HepG2 (cell line): ENCODE measurements at regions of chr17 and their contacts with region 1.

Region 1: DNA sequence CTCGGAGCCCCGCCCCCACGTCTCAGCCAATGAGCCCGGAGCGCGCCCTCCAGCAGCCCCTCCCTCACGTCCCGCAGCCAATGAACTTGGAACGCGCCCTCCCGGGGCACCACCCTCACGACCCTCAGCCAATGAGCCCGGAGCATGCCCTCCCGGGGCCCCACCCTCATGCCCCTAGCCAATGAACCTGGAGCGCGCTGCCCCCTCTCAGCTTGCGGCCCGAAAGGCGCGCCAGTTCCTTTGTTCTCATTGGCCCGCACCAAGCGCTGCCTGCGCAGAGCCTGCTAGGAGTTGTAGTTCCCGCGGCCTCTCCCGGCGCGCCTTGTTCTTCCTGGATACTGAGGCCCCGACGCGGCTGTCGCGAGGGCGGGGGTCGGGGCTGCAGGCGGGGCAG is at the start of gene LRRC45:
- DNase-seq: peak; percentile 99
- ATAC-seq: peak; percentile 76
- H3K4me3 ChIP-seq: peak within 1 kb of the TSS; percentile 80 to 90 (median 90)
- H3K27ac ChIP-seq: peak within 1 kb of the TSS; percentile 78
- H3K4me1 ChIP-seq: peaks cover 69% of the 10 kb centered on the region
- H3K27me3 ChIP-seq: no peaks in the 10 kb centered on the region; a peak in 1 of 5 replicates
- CTCF ChIP-seq: peak; percentile 9; the same call in 1 of the 2 replicates
- EP300 ChIP-seq: no peak
- POLR2A ChIP-seq: no peak
- RAD21 ChIP-seq: no peak
- total RNA-seq, gene LRRC45: 21.4 and 48.1 TPM in 2 replicates

Region 2: GRCh38 chr17:81871387-81872230 is 151.4 kb before region 1 on chr17:
- CTCF ChIA-PET with region 1: interaction called, 3 read pairs
- POLR2A ChIA-PET with region 1: interaction called, 11 read pairs
- in situ Hi-C with region 1: no loop called
- intact Hi-C with region 1: loop called (anchors 5 kb)
- DNase-seq: peak; percentile 86
- ATAC-seq: no peak; the same call in 2 of the 3 replicates
- H3K4me3 ChIP-seq: peak overlapping the region; percentile 65 to 92 (median 90)
- H3K27ac ChIP-seq: peak overlapping the region; percentile 98
- H3K4me1 ChIP-seq: peaks cover 52% of the 10 kb centered on the region
- H3K27me3 ChIP-seq: no peaks in the 10 kb centered on the region
- CTCF ChIP-seq: peak; percentile 74
- EP300 ChIP-seq: no peak; a peak in 1 of 4 replicates
- POLR2A ChIP-seq: peak in 1 of 2 experiments; percentile 58; a peak in 2 of 4 replicates
- RAD21 ChIP-seq: peak; percentile 81

Region 3: DNA sequence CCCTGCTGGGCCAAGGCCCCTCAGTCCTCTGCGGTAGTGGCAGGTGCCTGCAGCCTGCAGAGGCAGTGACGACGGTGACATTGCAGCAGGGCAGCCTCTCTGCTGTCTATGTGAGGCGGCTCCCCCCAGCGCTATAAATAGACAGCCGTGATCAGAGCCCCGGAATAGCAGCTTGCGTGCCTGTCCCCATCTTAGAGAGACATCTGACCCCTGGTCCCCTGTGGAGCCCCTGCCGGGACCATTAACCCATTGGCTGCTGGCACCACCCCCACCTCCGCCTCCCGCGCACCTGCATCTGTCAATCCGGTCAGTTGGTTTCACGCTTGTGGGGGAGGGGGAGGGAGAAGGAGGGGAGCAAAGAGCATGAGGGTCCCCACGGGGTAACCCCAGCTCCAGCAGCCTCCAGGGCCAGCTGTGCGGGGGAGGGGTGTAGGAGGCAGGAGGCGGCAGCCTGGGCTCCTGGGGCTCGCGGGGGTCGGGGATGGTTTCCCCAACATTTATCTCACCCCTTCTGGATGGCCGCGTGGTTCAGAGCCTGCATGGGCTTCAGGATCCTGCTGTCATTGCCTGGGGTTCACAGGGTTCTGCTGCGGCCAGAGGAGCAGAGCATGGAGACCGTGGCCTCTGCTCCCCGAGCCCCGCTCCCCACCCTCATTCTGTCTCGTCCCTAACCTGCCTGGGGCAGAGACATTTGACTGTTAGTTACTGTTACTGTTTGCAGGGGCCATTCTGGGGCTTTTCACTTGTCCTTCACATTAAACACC is 81.0 kb before region 1 on chr17:
- CTCF ChIA-PET with region 1: no interaction called
- POLR2A ChIA-PET with region 1: interaction called, 11 read pairs
- in situ Hi-C with region 1: no loop called
- intact Hi-C with region 1: no loop called
- DNase-seq: no peak
- ATAC-seq: peak; percentile 33
- H3K4me3 ChIP-seq: no peak overlapping the region; a peak in 1 of 6 replicates
- H3K27ac ChIP-seq: no peak overlapping the region
- H3K4me1 ChIP-seq: peaks cover 67% of the 10 kb centered on the region
- H3K27me3 ChIP-seq: peaks cover 16 to 33% of the 10 kb centered on the region in 2 experiments; a peak in 4 of 5 replicates
- CTCF ChIP-seq: no peak
- EP300 ChIP-seq: no peak
- POLR2A ChIP-seq: no peak
- RAD21 ChIP-seq: no peak

Region 4: GRCh38 chr17:81991684-81992305 is 31.2 kb before region 1 on chr17:
- CTCF ChIA-PET with region 1: interaction called, 6 read pairs
- POLR2A ChIA-PET with region 1: interaction called, 470 read pairs
- in situ Hi-C with region 1: no loop called
- intact Hi-C with region 1: loop called (anchors 1 kb)
- DNase-seq: peak; percentile 98
- ATAC-seq: peak; percentile 66
- H3K4me3 ChIP-seq: peak overlapping the region; percentile 29 to 69 (median 44)
- H3K27ac ChIP-seq: peak overlapping the region; percentile 97
- H3K4me1 ChIP-seq: peaks cover 70% of the 10 kb centered on the region
- H3K27me3 ChIP-seq: no peaks in the 10 kb centered on the region
- CTCF ChIP-seq: peak; percentile 77
- EP300 ChIP-seq: peak; percentile 3 to 66; a peak in 3 of 4 replicates
- POLR2A ChIP-seq: peak in 1 of 2 experiments; percentile 92; a peak in 2 of 4 replicates
- RAD21 ChIP-seq: peak; percentile 88

Region 5: GRCh38 chr17:82051776-82052637 is 29.0 kb after region 1 on chr17 and contains the starts of genes GPS1 and RFNG:
- CTCF ChIA-PET with region 1: no interaction called
- POLR2A ChIA-PET with region 1: interaction called, 10 read pairs
- in situ Hi-C with region 1: no loop called
- intact Hi-C with region 1: no loop called
- DNase-seq: peak; percentile 60
- ATAC-seq: peak; percentile 49
- H3K4me3 ChIP-seq: peak within 1 kb of the TSS; percentile 76 to 99 (median 95)
- H3K27ac ChIP-seq: peak within 1 kb of the TSS; percentile 71
- H3K4me1 ChIP-seq: peaks cover 50% of the 10 kb centered on the region
- H3K27me3 ChIP-seq: no peaks in the 10 kb centered on the region; a peak in 2 of 5 replicates
- CTCF ChIP-seq: no peak
- EP300 ChIP-seq: no peak
- POLR2A ChIP-seq: no peak
- RAD21 ChIP-seq: peak; percentile 54; the same call in 1 of the 2 replicates
- total RNA-seq, gene GPS1: 106 and 124 TPM in 2 replicates
- total RNA-seq, gene RFNG: 27.8 and 64.0 TPM in 2 replicates

Region 6: GRCh38 chr17:82153745-82154375 is 130.9 kb after region 1 on chr17:
- CTCF ChIA-PET with region 1: interaction called, 14 read pairs
- POLR2A ChIA-PET with region 1: interaction called, 4 read pairs
- in situ Hi-C with region 1: no loop called
- intact Hi-C with region 1: loop called (anchors 5 kb)
- DNase-seq: peak; percentile 74
- ATAC-seq: peak; percentile 92
- H3K4me3 ChIP-seq: no peak overlapping the region
- H3K27ac ChIP-seq: no peak overlapping the region
- H3K4me1 ChIP-seq: peaks cover 7% of the 10 kb centered on the region; the same call in 1 of the 2 replicates
- H3K27me3 ChIP-seq: no peaks in the 10 kb centered on the region
- CTCF ChIP-seq: peak; percentile 100
- EP300 ChIP-seq: no peak
- POLR2A ChIP-seq: no peak
- RAD21 ChIP-seq: peak; percentile 99

Region 7: GRCh38 chr17:82193520-82194220 is 170.7 kb after region 1 on chr17:
- CTCF ChIA-PET with region 1: no interaction called
- POLR2A ChIA-PET with region 1: no interaction called
- in situ Hi-C with region 1: no loop called
- intact Hi-C with region 1: no loop called
- DNase-seq: no peak
- ATAC-seq: no peak
- H3K4me3 ChIP-seq: no peak overlapping the region
- H3K27ac ChIP-seq: no peak overlapping the region
- H3K4me1 ChIP-seq: peaks cover 4% of the 10 kb centered on the region
- H3K27me3 ChIP-seq: no peaks in the 10 kb centered on the region
- CTCF ChIP-seq: no peak
- EP300 ChIP-seq: no peak
- POLR2A ChIP-seq: no peak
- RAD21 ChIP-seq: no peak